Naive thymus-derived CD4-positive, alpha-beta T cell (primary cell): ENCODE measurements at regions of chr3 and their contacts with region 1.

Region 1: DNA sequence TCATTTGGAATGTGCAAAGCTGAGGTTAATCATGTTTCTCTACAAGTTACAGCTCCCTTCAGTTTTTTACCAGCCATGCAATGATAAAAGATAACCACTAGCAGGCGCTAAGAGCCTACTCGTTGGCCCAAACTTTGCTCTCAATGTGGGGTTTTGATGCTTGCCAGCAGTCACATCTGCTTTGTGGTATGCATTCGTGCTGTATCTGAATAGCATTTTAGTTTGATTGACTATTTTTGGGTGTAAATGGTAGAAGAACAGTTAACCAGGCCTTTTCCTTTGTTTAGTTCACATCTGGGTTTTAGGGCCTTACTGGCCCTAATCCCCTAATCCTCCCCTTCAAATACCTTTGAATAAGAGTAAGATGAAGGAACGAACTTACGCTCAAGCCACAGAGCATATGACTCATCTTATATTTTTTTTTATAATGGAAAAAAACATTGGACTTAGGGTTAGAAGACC is 4.4 kb upstream of the CLDN11 start:
- DNase-seq: peak in 6 of 9 donors; percentile 25 to 58 (median 48)
- ATAC-seq: peak; percentile 75
- H3K4me3 ChIP-seq: no peak overlapping the region
- H3K4me3 Mint-ChIP-seq: no peak overlapping the region
- H3K27ac ChIP-seq: no peak overlapping the region
- H3K27ac Mint-ChIP-seq: no peak overlapping the region
- H3K4me1 ChIP-seq: peaks cover 4 to 7% of the 10 kb centered on the region in 2 donors
- H3K4me1 Mint-ChIP-seq: peaks cover 5 to 15% (median 7%) of the 10 kb centered on the region in 7 donors
- H3K27me3 ChIP-seq: peaks cover 0 to 8% of the 10 kb centered on the region in 2 donors
- H3K27me3 Mint-ChIP-seq: peaks cover 14 to 40% (median 17%) of the 10 kb centered on the region in 5 donors

Region 2: DNA sequence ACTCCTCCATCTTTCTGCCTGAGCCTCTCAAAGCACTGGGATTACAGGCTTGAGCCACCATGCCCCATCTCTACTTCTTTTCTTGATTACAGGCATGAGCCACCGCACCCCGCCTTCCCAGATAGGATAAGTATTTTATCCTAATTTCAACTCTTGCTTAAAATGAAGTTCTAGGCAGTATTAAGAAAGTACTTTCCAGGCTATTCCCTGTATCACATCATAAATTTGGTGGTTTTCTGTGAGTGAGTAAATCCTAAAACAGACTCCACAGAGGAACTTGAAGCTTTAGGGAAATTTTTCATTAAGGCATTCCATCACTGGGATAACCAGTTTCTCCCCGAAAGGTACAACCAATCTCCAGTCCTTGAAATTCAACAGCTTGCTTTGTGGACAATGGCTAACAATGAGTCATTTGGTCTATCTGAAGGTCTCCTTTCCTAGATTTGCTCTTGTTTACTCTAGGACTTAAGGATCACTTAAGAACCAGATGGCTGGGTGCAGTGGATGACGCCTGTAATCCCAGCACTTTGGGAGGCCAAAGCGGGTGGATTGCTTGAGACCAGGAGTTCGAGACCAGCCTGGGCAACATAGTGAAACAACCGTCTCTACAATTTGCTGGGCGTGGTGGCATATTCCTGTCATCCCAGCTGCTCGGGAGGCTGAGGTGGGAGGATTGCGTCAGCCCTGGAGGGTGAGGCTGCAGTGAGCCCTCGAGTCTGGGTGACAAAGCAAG is 106.4 kb before region 1 on chr3:
- CTCF ChIA-PET with region 1: interaction called, 6 read pairs
- POLR2A ChIA-PET with region 1: no interaction called
- intact Hi-C with region 1: loop called (anchors 1 to 2 kb)
- DNase-seq: no peak
- ATAC-seq: no peak
- H3K4me3 ChIP-seq: no peak overlapping the region
- H3K4me3 Mint-ChIP-seq: no peak overlapping the region
- H3K27ac ChIP-seq: no peak overlapping the region
- H3K27ac Mint-ChIP-seq: no peak overlapping the region
- H3K4me1 ChIP-seq: no peaks in the 10 kb centered on the region
- H3K4me1 Mint-ChIP-seq: peaks cover 0 to 2% (median 0%) of the 10 kb centered on the region in 7 donors
- H3K27me3 ChIP-seq: no peaks in the 10 kb centered on the region
- H3K27me3 Mint-ChIP-seq: no peaks in the 10 kb centered on the region

Region 3: GRCh38 chr3:170811928-170812591 is 397.8 kb after region 1 on chr3:
- CTCF ChIA-PET with region 1: interaction called, 16 read pairs
- POLR2A ChIA-PET with region 1: no interaction called
- intact Hi-C with region 1: loop called (anchors 1 kb)
- DNase-seq: peak; percentile 17 to 77 (median 68)
- ATAC-seq: peak; percentile 92
- H3K4me3 ChIP-seq: no peak overlapping the region
- H3K4me3 Mint-ChIP-seq: no peak overlapping the region
- H3K27ac ChIP-seq: no peak overlapping the region
- H3K27ac Mint-ChIP-seq: no peak overlapping the region
- H3K4me1 ChIP-seq: no peaks in the 10 kb centered on the region
- H3K4me1 Mint-ChIP-seq: peaks cover 0 to 8% (median 0%) of the 10 kb centered on the region in 7 donors
- H3K27me3 ChIP-seq: no peaks in the 10 kb centered on the region
- H3K27me3 Mint-ChIP-seq: peaks cover 0 to 6% (median 0%) of the 10 kb centered on the region in 5 donors

Region 4: DNA sequence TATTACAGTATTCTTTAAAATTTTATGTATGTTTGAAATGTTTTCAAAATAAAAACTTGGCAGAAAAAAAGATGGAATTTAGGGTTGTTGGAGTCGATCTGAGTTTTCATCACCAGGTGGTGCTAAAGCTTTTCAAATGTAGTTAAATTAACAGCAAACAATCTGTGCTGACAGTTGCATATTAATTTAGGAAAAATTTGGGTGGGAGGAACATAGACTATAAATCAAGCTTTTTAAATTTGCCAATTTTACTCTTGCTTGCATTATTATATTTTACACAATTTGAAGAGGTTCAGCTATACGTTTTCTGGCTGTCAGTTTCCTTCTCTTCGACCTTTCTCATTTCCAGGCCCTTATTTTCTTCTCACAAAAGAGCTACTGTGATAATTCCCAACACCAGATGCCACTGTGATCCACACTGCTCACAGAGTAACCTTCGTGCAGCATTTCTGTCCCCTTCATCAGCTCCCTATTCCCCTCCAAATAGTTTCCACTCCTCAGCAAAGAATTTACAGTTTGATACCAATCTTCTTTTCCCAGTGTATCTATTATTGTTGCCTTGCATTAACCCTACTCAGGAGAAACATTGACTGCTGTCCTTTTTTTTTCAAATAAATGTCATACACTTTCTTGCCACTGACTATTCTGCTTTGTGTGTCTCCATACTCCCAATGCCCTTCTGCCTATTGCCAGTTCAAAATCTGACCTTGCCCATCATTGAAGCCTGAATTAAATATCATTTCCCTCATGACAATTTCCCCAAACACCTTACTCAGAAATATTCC is 547.6 kb after region 1 on chr3:
- CTCF ChIA-PET with region 1: no interaction called
- POLR2A ChIA-PET with region 1: no interaction called
- intact Hi-C with region 1: loop called in 1 of 2 experiments (anchors 10 kb)
- DNase-seq: peak in 5 of 9 donors; percentile 4 to 20 (median 14)
- ATAC-seq: no peak
- H3K4me3 ChIP-seq: no peak overlapping the region
- H3K4me3 Mint-ChIP-seq: no peak overlapping the region
- H3K27ac ChIP-seq: no peak overlapping the region
- H3K27ac Mint-ChIP-seq: peak overlapping the region in 1 of 9 donors; percentile 23
- H3K4me1 ChIP-seq: no peaks in the 10 kb centered on the region
- H3K4me1 Mint-ChIP-seq: no peaks in the 10 kb centered on the region
- H3K27me3 ChIP-seq: no peaks in the 10 kb centered on the region
- H3K27me3 Mint-ChIP-seq: peaks cover 0 to 23% (median 19%) of the 10 kb centered on the region in 5 donors